B cell (primary cell): ENCODE measurements at regions of chr3 and their contacts with region 1.

Region 1: GRCh38 chr3:49454458-49454857 is 15.6 kb upstream of the DAG1 start:
- DNase-seq: no peak
- ATAC-seq: no peak
- H3K4me3 ChIP-seq: no peak overlapping the region
- H3K4me3 Mint-ChIP-seq: no peak overlapping the region
- H3K27ac ChIP-seq: no peak overlapping the region
- H3K27ac Mint-ChIP-seq: peak overlapping the region; percentile 22
- H3K4me1 ChIP-seq: no peaks in the 10 kb centered on the region
- H3K4me1 Mint-ChIP-seq: no peaks in the 10 kb centered on the region
- H3K27me3 ChIP-seq: no peaks in the 10 kb centered on the region
- H3K27me3 Mint-ChIP-seq: no peaks in the 10 kb centered on the region
- CTCF ChIP-seq: no peak

Region 2: DNA sequence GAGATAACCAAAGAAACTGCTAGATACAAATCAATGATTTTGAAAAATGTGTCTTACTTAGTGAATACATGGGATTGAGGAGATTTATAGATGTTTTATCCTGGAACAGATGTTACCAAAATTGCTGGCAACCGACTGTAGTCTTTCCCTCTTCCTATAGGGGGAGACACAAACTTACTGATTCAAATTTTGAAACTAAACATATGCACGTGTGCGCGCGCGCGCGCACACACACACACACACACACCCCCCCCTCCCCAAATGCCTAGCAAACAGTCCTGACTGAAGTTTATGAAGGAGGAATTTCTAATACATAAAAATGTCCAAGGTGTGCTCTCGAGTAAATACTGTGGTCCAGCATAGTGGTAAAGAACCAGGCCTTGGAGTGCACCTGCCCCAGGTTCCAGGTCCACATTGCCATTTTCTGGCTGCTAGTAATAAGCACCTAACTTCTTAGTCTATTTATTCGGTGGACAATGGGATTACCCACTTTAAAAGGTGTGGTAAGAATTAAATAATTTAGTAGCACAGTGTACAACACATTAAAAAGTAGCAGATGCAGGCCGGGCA is 158.9 kb before region 1 on chr3:
- CTCF ChIA-PET with region 1: interaction called, 20 read pairs
- POLR2A ChIA-PET with region 1: no interaction called
- intact Hi-C with region 1: loop called (anchors 1 kb)
- DNase-seq: peak; percentile 67
- ATAC-seq: peak; percentile 53
- H3K4me3 ChIP-seq: no peak overlapping the region
- H3K4me3 Mint-ChIP-seq: no peak overlapping the region
- H3K27ac ChIP-seq: no peak overlapping the region
- H3K27ac Mint-ChIP-seq: peak overlapping the region; percentile 46
- H3K4me1 ChIP-seq: no peaks in the 10 kb centered on the region
- H3K4me1 Mint-ChIP-seq: no peaks in the 10 kb centered on the region
- H3K27me3 ChIP-seq: no peaks in the 10 kb centered on the region
- H3K27me3 Mint-ChIP-seq: no peaks in the 10 kb centered on the region
- CTCF ChIP-seq: peak; percentile 82

Region 3: GRCh38 chr3:49351521-49352011 is 102.9 kb before region 1 on chr3:
- CTCF ChIA-PET with region 1: interaction called, 14 read pairs
- POLR2A ChIA-PET with region 1: no interaction called
- intact Hi-C with region 1: no loop called
- DNase-seq: no peak
- ATAC-seq: peak; percentile 45
- H3K4me3 ChIP-seq: no peak overlapping the region
- H3K4me3 Mint-ChIP-seq: peak overlapping the region; percentile 28
- H3K27ac ChIP-seq: no peak overlapping the region
- H3K27ac Mint-ChIP-seq: peak overlapping the region; percentile 75
- H3K4me1 ChIP-seq: peaks cover 38 to 51% of the 10 kb centered on the region in 2 donors
- H3K4me1 Mint-ChIP-seq: peaks cover 48% of the 10 kb centered on the region
- H3K27me3 ChIP-seq: no peaks in the 10 kb centered on the region
- H3K27me3 Mint-ChIP-seq: no peaks in the 10 kb centered on the region
- CTCF ChIP-seq: no peak

Region 4: DNA sequence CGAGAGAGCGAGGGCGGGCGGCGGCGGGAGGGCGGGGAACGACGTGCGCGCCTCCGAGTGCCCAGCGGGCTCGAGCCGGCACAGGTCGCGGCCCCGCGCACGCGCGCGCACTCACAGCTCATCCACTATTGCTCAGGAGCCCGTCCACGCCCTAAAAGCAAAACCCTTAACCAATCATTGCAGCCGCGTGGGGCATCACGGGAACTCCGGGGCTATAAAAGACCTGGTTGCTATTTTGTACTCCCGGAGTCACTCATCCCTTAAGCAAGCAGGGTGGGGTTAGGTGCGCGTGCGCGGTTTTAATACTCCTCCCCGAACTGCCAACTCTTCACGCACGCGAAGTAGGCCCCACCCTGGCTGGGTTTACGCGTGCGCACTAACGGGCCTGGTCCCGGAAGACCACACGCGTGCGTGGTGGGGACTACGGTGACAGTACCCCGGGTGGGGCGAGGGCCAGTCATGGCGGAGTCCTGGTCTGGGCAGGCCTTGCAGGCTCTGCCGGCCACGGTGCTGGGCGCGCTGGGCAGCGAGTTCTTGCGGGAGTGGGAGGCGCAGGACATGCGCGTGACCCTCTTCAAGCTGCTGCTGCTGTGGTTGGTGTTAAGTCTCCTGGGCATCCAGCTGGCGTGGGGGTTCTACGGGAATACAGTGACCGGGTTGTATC is 42.4 kb before region 1 on chr3 and contains the starts of genes RHOA and TCTA:
- CTCF ChIA-PET with region 1: interaction called, 21 read pairs
- POLR2A ChIA-PET with region 1: no interaction called
- intact Hi-C with region 1: loop called (anchors 1 kb)
- DNase-seq: peak; percentile 100
- ATAC-seq: peak; percentile 77
- H3K4me3 ChIP-seq: peak within 1 kb of the TSS; percentile 74 to 96 (median 90)
- H3K4me3 Mint-ChIP-seq: peak within 1 kb of the TSS; percentile 96
- H3K27ac ChIP-seq: peak within 1 kb of the TSS; percentile 90 to 97
- H3K27ac Mint-ChIP-seq: peak within 1 kb of the TSS; percentile 96
- H3K4me1 ChIP-seq: peaks cover 71 to 83% of the 10 kb centered on the region in 2 donors
- H3K4me1 Mint-ChIP-seq: peaks cover 74% of the 10 kb centered on the region
- H3K27me3 ChIP-seq: no peaks in the 10 kb centered on the region
- H3K27me3 Mint-ChIP-seq: no peaks in the 10 kb centered on the region
- CTCF ChIP-seq: no peak
- total RNA-seq, gene RHOA: 298 and 306 TPM in 2 replicates
- total RNA-seq, gene TCTA: 46.4 and 49.3 TPM in 2 replicates

Region 5: DNA sequence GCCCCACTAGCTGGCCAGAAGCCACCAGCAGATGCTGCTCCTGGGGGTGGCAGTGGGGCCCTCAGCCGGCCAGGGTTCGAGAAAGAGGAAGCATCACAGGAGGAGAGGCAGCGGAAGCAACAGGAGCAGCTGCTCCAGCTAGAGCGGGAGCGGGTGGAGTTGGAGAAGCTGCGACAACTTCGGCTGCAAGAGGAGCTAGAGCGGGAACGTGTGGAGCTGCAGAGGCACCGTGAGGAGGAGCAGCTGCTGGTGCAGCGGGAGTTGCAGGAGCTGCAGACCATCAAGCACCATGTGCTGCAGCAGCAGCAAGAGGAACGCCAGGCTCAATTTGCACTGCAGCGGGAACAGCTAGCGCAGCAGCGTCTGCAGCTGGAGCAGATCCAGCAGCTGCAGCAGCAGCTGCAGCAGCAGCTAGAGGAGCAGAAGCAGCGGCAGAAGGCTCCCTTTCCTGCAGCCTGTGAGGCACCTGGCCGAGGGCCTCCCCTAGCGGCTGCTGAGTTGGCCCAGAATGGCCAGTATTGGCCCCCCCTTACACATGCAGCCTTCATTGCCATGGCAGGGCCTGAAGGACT is 202.2 kb after region 1 on chr3:
- CTCF ChIA-PET with region 1: no interaction called
- POLR2A ChIA-PET with region 1: no interaction called
- intact Hi-C with region 1: no loop called
- DNase-seq: no peak
- ATAC-seq: no peak
- H3K4me3 ChIP-seq: no peak overlapping the region
- H3K4me3 Mint-ChIP-seq: no peak overlapping the region
- H3K27ac ChIP-seq: no peak overlapping the region
- H3K27ac Mint-ChIP-seq: no peak overlapping the region
- H3K4me1 ChIP-seq: peaks cover 0 to 11% of the 10 kb centered on the region in 2 donors
- H3K4me1 Mint-ChIP-seq: peaks cover 4% of the 10 kb centered on the region
- H3K27me3 ChIP-seq: peaks cover 0 to 5% (median 0%) of the 10 kb centered on the region in 4 experiments
- H3K27me3 Mint-ChIP-seq: peaks cover 5% of the 10 kb centered on the region
- CTCF ChIP-seq: no peak

Region 6: GRCh38 chr3:49865198-49865745 is 410.8 kb after region 1 on chr3:
- CTCF ChIA-PET with region 1: no interaction called
- POLR2A ChIA-PET with region 1: no interaction called
- intact Hi-C with region 1: no loop called
- DNase-seq: no peak
- ATAC-seq: no peak
- H3K4me3 ChIP-seq: no peak overlapping the region
- H3K4me3 Mint-ChIP-seq: no peak overlapping the region
- H3K27ac ChIP-seq: no peak overlapping the region
- H3K27ac Mint-ChIP-seq: no peak overlapping the region
- H3K4me1 ChIP-seq: peaks cover 12 to 13% of the 10 kb centered on the region in 2 donors
- H3K4me1 Mint-ChIP-seq: no peaks in the 10 kb centered on the region
- H3K27me3 ChIP-seq: peaks cover 0 to 52% (median 16%) of the 10 kb centered on the region in 4 experiments
- H3K27me3 Mint-ChIP-seq: peaks cover 36% of the 10 kb centered on the region
- CTCF ChIP-seq: no peak